CD14-positive monocyte (primary cell): ENCODE measurements at regions of chr17 and their contacts with region 1.

Region 1: DNA sequence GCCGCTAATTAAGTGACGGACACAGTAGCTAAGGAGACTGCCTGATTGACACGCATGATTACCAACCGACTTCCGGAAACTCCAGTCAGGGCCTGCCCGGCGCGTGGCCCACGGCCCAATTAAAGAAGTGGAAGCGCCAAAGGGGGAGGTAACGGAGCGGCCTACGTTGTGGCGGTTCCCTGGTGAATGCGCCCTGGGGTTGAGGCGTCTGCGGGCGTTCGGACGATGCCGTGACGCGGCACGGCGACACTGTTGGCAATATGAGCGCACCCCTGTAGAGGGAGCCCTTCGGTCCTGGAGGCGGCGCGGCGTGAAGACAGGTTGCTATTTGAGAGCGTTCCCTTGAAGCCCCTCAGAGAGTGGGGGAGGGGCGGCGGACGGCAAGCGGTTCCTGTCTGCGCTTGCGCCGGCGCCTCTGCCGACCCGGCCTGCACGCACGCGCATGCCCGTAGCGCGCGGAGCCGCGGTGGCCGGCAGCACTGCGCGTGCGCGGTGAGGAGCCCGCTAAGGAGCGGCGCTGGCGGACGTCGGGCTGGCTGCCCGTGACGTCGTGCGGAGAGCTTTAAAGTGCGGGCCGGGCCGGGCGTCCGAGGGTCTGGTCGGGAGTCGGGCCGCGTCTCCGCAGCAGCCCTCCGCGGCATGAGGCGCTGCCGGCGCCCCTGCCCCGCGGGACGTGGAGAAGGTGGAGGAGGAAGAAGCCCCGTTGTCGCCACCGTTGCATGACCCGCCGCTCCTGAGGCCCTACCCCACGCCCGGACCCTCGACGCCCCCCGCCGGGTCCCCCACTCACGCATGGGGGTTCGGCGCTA is at the start of gene ALKBH5:
- DNase-seq: peak; percentile 99 to 100 (median 99)
- H3K4me3 ChIP-seq: peak within 1 kb of the TSS; percentile 80 to 86 (median 83)
- H3K4me3 Mint-ChIP-seq: peak within 1 kb of the TSS; percentile 88 to 94
- H3K27ac ChIP-seq: peak within 1 kb of the TSS; percentile 95 to 96
- H3K27ac Mint-ChIP-seq: peak within 1 kb of the TSS; percentile 97 to 100 (median 99)
- H3K4me1 ChIP-seq: peaks cover 50 to 56% of the 10 kb centered on the region in 2 donors
- H3K4me1 Mint-ChIP-seq: peaks cover 49% of the 10 kb centered on the region
- H3K27me3 ChIP-seq: no peaks in the 10 kb centered on the region
- H3K27me3 Mint-ChIP-seq: peaks cover 0 to 2% (median 0%) of the 10 kb centered on the region in 3 donors
- CTCF ChIP-seq: peak; percentile 31
- polyA plus RNA-seq, gene ALKBH5: 50.4 to 79.1 (median 78.9) TPM

Region 2: GRCh38 chr17:17950806-17951205 is 232.7 kb before region 1 on chr17:
- intact Hi-C with region 1: no loop called
- DNase-seq: no peak
- H3K4me3 ChIP-seq: no peak overlapping the region
- H3K4me3 Mint-ChIP-seq: no peak overlapping the region
- H3K27ac ChIP-seq: no peak overlapping the region
- H3K27ac Mint-ChIP-seq: no peak overlapping the region
- H3K4me1 ChIP-seq: peaks cover 6 to 8% of the 10 kb centered on the region in 2 donors
- H3K4me1 Mint-ChIP-seq: peaks cover 20% of the 10 kb centered on the region
- H3K27me3 ChIP-seq: no peaks in the 10 kb centered on the region
- H3K27me3 Mint-ChIP-seq: no peaks in the 10 kb centered on the region
- CTCF ChIP-seq: no peak

Region 3: DNA sequence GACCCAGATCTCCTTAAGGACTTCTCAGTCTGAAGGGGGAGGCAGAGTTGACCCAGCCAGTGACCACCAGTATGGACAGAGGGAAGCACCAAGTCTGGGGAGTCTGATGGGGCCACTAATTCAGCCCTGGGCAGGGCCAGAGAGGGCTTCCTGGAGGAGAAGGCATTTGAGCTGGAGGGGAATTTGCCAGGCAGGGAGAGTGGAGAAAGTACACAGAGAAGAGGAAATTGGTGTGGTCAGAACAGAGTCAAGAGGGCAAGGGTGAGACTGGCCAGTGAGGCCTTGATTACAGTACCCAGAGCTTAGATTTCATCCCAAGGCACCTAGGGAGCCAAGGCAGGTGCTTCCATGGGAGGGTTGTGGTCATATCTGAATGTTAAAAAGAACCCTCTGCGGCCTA is 38.7 kb before region 1 on chr17:
- intact Hi-C with region 1: loop called (anchors 5 kb)
- DNase-seq: no peak
- H3K4me3 ChIP-seq: no peak overlapping the region
- H3K4me3 Mint-ChIP-seq: no peak overlapping the region
- H3K27ac ChIP-seq: no peak overlapping the region
- H3K27ac Mint-ChIP-seq: peak overlapping the region in 2 of 7 donors; percentile 55
- H3K4me1 ChIP-seq: no peaks in the 10 kb centered on the region
- H3K4me1 Mint-ChIP-seq: peaks cover 2% of the 10 kb centered on the region
- H3K27me3 ChIP-seq: no peaks in the 10 kb centered on the region
- H3K27me3 Mint-ChIP-seq: peaks cover 4 to 17% (median 8%) of the 10 kb centered on the region in 3 donors
- CTCF ChIP-seq: no peak

Region 4: DNA sequence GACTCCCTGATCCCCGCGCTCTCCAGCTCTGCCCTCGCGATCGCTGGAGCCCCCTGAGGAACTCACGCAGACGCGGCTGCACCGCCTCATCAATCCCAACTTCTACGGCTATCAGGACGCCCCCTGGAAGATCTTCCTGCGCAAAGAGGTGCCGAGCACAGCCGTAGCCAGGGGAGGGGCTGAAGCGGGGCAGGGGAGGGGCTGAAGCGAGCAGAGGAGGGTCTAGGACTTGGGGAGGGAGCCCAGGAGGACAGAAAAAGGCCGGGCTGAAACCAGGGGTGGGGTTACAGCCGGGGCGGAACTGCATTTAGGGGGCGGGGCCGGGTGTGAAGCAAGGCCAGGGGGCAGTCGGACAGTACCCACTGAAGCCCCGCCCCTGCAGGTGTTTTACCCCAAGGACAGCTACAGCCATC is 29.8 kb before region 1 on chr17:
- intact Hi-C with region 1: loop called (anchors 5 kb)
- DNase-seq: peak; percentile 54 to 63 (median 55)
- H3K4me3 ChIP-seq: peak overlapping the region; percentile 67 to 85 (median 70)
- H3K4me3 Mint-ChIP-seq: peak overlapping the region; percentile 86 to 95
- H3K27ac ChIP-seq: peak overlapping the region; percentile 5 to 77
- H3K27ac Mint-ChIP-seq: peak overlapping the region in 6 of 7 donors; percentile 69 to 91 (median 79)
- H3K4me1 ChIP-seq: peaks cover 16 to 34% of the 10 kb centered on the region in 2 donors
- H3K4me1 Mint-ChIP-seq: peaks cover 26% of the 10 kb centered on the region
- H3K27me3 ChIP-seq: no peaks in the 10 kb centered on the region
- H3K27me3 Mint-ChIP-seq: peaks cover 0 to 10% (median 2%) of the 10 kb centered on the region in 3 donors
- CTCF ChIP-seq: no peak